ENCODE measurements at regions of chr3 and their contacts with region 1.

Region 1: GRCh38 chr3:40309418-40309924 is at the start of gene EIF1B:
- DNase-seq: peak; percentile 99
- H3K4me3 ChIP-seq: peak within 1 kb of the TSS; percentile 81 to 100 (median 96)
- H3K27ac ChIP-seq: peak within 1 kb of the TSS; percentile 96 to 100 (median 98)
- H3K4me1 ChIP-seq: peaks cover 0 to 47% (median 16%) of the 10 kb centered on the region in 4 donors
- H3K27me3 ChIP-seq: no peaks in the 10 kb centered on the region
- CTCF ChIP-seq: peak; percentile 76 to 94 (median 88)
- EP300 ChIP-seq: no peak
- POLR2A ChIP-seq: peak; percentile 93
- total RNA-seq, gene EIF1B: 5.2 to 90.2 (median 25.2) TPM

Region 2: GRCh38 chr3:39406368-39407258 is 902.9 kb before region 1 on chr3 and contains the start of gene RPSA:
- in situ Hi-C with region 1: loop called in 1 of 4 experiments (anchors 25 kb)
- intact Hi-C with region 1: no loop called
- DNase-seq: peak; percentile 97
- H3K4me3 ChIP-seq: peak within 1 kb of the TSS; percentile 59 to 78 (median 74)
- H3K27ac ChIP-seq: peak within 1 kb of the TSS; percentile 82 to 92 (median 89)
- H3K4me1 ChIP-seq: peaks cover 6 to 41% (median 21%) of the 10 kb centered on the region in 4 donors
- H3K27me3 ChIP-seq: no peaks in the 10 kb centered on the region
- CTCF ChIP-seq: peak; percentile 14 to 49 (median 20)
- EP300 ChIP-seq: no peak
- POLR2A ChIP-seq: peak; percentile 98
- total RNA-seq, gene RPSA: 460 to 1,003 (median 843) TPM

Region 3: GRCh38 chr3:39569095-39569494 is 740.4 kb before region 1 on chr3:
- in situ Hi-C with region 1: no loop called
- intact Hi-C with region 1: no loop called
- DNase-seq: no peak
- H3K4me3 ChIP-seq: no peak overlapping the region
- H3K27ac ChIP-seq: no peak overlapping the region
- H3K4me1 ChIP-seq: no peaks in the 10 kb centered on the region
- H3K27me3 ChIP-seq: no peaks in the 10 kb centered on the region
- CTCF ChIP-seq: no peak
- EP300 ChIP-seq: no peak
- POLR2A ChIP-seq: no peak

Measured in transverse colon (tissue), 4 donors.